Calu3 (cell line): ENCODE measurements at regions of chr5 and their contacts with region 1.

Region 1: GRCh38 chr5:100872408-100873190 is 30.5 kb downstream of the ST8SIA4 start:
- DNase-seq: no peak
- H3K4me3 Mint-ChIP-seq: no peak overlapping the region
- H3K27ac Mint-ChIP-seq: no peak overlapping the region
- H3K4me1 Mint-ChIP-seq: peaks cover 20% of the 10 kb centered on the region
- H3K27me3 Mint-ChIP-seq: no peaks in the 10 kb centered on the region
- CTCF ChIP-seq: no peak

Region 2: GRCh38 chr5:100840384-100840783 is 32.2 kb before region 1 on chr5:
- CTCF ChIA-PET with region 1: no interaction called
- intact Hi-C with region 1: loop called (anchors 5 kb)
- DNase-seq: peak; percentile 12
- H3K4me3 Mint-ChIP-seq: no peak overlapping the region
- H3K27ac Mint-ChIP-seq: no peak overlapping the region
- H3K4me1 Mint-ChIP-seq: peaks cover 25% of the 10 kb centered on the region
- H3K27me3 Mint-ChIP-seq: no peaks in the 10 kb centered on the region
- CTCF ChIP-seq: no peak

Region 3: GRCh38 chr5:101260714-101261256 is 388.2 kb after region 1 on chr5:
- CTCF ChIA-PET with region 1: no interaction called
- intact Hi-C with region 1: no loop called
- DNase-seq: no peak
- H3K4me3 Mint-ChIP-seq: no peak overlapping the region
- H3K27ac Mint-ChIP-seq: no peak overlapping the region
- H3K4me1 Mint-ChIP-seq: peaks cover 16% of the 10 kb centered on the region
- H3K27me3 Mint-ChIP-seq: no peaks in the 10 kb centered on the region
- CTCF ChIP-seq: no peak